ENCODE measurements at regions of chr5 and their contacts with region 1.

Region 1: DNA sequence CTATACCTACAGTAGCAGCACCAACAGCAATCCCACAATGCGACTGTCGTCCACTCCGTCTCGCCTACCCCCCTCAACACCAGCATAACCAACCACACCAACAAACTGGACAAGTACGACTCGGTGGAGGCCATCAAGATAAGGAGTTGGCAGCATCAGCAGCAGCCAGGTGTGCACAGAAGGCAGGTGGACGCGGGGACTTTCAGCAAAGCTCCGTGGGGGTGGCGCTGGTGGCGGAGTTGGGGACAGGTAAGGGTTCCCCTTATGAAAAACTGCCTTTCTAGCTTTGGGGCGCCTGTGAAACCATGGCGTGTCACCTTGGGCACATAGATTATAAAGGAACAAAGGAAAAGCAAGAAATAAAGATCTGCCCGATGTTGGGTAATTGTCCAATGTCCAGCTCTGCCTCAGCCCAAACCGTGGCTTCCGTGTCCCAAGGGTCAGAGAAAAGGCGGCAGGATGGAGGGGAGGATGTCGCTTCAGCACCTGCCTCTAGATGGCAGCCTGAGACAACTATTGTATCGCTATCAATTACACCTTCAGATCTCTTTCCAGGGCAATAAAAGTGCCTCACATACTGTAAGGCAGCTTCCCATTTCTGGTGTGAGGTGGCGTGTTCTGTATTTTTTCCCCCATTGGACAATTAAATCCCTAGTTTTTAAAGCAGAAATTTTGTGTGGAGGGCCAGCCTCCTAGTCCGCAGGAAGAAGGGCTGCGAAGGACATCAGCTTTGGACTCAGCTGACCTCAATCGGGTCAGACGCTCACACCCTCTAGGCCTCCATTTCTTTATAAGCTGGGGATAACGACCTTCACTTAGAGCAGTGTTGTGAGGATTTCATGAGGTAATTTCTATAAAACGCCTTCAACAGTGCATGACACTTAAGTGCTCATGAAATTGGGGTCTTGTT is 58.8 kb downstream of the MTRR start:
- DNase-seq: peak in 2 of 5 donors; percentile 18 to 24
- ATAC-seq: peak; percentile 55 to 84 (median 77)
- H3K4me3 ChIP-seq: no peak overlapping the region
- H3K27ac ChIP-seq: no peak overlapping the region
- H3K4me1 ChIP-seq: no peaks in the 10 kb centered on the region
- H3K27me3 ChIP-seq: peaks cover 0 to 10% (median 0%) of the 10 kb centered on the region in 9 donors
- CTCF ChIP-seq: peak; percentile 54 to 80 (median 64)
- POLR2A ChIP-seq: no peak

Region 2: GRCh38 chr5:9207817-9208418 is 1280.2 kb after region 1 on chr5:
- intact Hi-C with region 1: loop called in 3 of 10 experiments (anchors 10 kb)
- DNase-seq: no peak
- ATAC-seq: no peak
- H3K4me3 ChIP-seq: no peak overlapping the region
- H3K27ac ChIP-seq: no peak overlapping the region
- H3K4me1 ChIP-seq: no peaks in the 10 kb centered on the region
- H3K27me3 ChIP-seq: no peaks in the 10 kb centered on the region
- CTCF ChIP-seq: peak in 11 of 12 donors; percentile 19 to 58 (median 41)
- POLR2A ChIP-seq: no peak

Measured in heart left ventricle (tissue), 16 donors.